ENCODE measurements at regions of chr13 and their contacts with region 1.

Region 1: DNA sequence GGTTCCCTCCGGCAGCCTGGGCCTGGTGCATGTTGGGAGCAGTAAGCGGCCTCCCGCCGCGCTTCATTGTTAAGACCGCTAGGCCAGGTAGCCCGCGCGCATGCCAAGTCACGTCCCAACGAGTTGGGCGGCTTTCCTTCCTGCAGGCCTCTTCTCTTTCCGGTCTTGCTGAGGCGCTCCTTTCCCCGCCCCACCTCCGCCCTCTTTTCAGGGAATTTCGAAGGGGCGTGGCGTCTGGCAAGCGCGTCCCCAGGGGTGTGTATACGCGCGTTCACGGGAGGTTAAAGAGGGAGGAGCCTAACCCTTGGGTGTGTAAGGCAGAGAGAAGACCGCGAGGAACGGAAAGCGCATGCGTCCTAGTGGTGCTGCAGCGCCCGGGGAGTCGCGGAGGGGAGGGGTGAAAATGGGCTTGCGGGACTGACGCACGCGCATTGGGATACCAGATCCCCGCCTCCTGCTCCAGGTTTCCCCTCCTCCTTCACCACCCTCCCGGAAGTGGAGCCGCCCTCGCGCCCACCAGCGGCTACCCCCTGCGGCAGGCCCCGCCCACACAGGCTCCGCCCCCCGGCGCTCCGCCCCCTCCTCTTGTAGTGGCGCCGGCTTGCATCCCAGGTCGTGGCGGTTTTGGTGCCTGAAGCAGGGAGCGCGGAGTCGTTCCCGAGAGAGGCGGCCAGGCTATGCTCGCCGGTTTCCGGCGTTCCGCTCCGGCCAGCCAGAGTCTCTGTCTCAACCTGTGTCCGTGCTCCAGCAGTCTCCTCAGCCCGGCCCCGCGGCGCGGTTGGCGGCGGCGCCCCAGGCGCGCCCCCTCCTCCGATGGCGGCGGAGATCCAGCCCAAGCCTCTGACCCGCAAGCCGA is at the start of gene WDFY2:
- DNase-seq: peak; percentile 100
- H3K4me3 Mint-ChIP-seq: peak within 1 kb of the TSS; percentile 88
- H3K27ac Mint-ChIP-seq: peak within 1 kb of the TSS; percentile 85
- H3K4me1 Mint-ChIP-seq: peaks cover 41% of the 10 kb centered on the region
- H3K27me3 Mint-ChIP-seq: no peaks in the 10 kb centered on the region
- CTCF ChIP-seq: no peak
- total RNA-seq, gene WDFY2: 46.7 and 56.2 TPM in 2 replicates

Region 2: GRCh38 chr13:51444922-51445321 is 139.2 kb before region 1 on chr13:
- CTCF ChIA-PET with region 1: interaction called, 3 read pairs
- POLR2A ChIA-PET with region 1: interaction called, 151 read pairs
- intact Hi-C with region 1: no loop called
- DNase-seq: peak; percentile 38
- H3K4me3 Mint-ChIP-seq: no peak overlapping the region
- H3K27ac Mint-ChIP-seq: no peak overlapping the region
- H3K4me1 Mint-ChIP-seq: peaks cover 7% of the 10 kb centered on the region
- H3K27me3 Mint-ChIP-seq: no peaks in the 10 kb centered on the region
- CTCF ChIP-seq: peak; percentile 32

Region 3: GRCh38 chr13:51557875-51558612 is 26.1 kb before region 1 on chr13:
- CTCF ChIA-PET with region 1: interaction called, 3 read pairs
- POLR2A ChIA-PET with region 1: interaction called, 45 read pairs
- intact Hi-C with region 1: no loop called
- DNase-seq: peak; percentile 79
- H3K4me3 Mint-ChIP-seq: peak overlapping the region; percentile 53
- H3K27ac Mint-ChIP-seq: peak overlapping the region; percentile 69
- H3K4me1 Mint-ChIP-seq: peaks cover 39% of the 10 kb centered on the region
- H3K27me3 Mint-ChIP-seq: no peaks in the 10 kb centered on the region
- CTCF ChIP-seq: no peak

Region 4: GRCh38 chr13:51632591-51633362 is 48.7 kb after region 1 on chr13:
- CTCF ChIA-PET with region 1: interaction called, 6 read pairs
- POLR2A ChIA-PET with region 1: interaction called, 31 read pairs
- intact Hi-C with region 1: no loop called
- DNase-seq: no peak
- H3K4me3 Mint-ChIP-seq: peak overlapping the region; percentile 66
- H3K27ac Mint-ChIP-seq: peak overlapping the region; percentile 97
- H3K4me1 Mint-ChIP-seq: peaks cover 50% of the 10 kb centered on the region
- H3K27me3 Mint-ChIP-seq: no peaks in the 10 kb centered on the region
- CTCF ChIP-seq: no peak

Region 5: DNA sequence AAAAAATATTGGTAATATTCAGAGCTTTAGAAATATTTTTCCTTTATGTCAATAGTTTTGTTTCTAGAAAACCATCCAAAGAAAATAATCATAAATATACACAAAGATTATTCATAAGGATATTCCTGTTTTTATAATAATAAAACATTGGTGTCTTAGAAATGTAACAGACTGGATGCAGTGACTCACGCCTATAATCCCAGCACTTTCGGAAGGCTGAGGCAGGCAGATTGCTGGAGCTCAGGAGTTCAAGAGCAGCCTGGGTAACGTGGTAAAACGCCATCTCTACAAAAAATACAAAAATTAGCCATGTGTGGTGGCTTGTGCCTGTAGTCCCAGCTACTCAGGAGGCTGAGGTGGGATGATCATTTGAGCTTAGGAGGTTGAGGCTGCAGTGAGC is 113.1 kb after region 1 on chr13:
- CTCF ChIA-PET with region 1: no interaction called
- POLR2A ChIA-PET with region 1: interaction called, 15 read pairs
- intact Hi-C with region 1: no loop called
- DNase-seq: peak; percentile 51
- H3K4me3 Mint-ChIP-seq: no peak overlapping the region
- H3K27ac Mint-ChIP-seq: peak overlapping the region; percentile 69
- H3K4me1 Mint-ChIP-seq: peaks cover 18% of the 10 kb centered on the region
- H3K27me3 Mint-ChIP-seq: no peaks in the 10 kb centered on the region
- CTCF ChIP-seq: no peak

Region 6: GRCh38 chr13:51781246-51782022 is 197.3 kb after region 1 on chr13:
- CTCF ChIA-PET with region 1: interaction called, 3 read pairs
- POLR2A ChIA-PET with region 1: interaction called, 3 read pairs
- intact Hi-C with region 1: loop called (anchors 2 kb)
- DNase-seq: peak; percentile 70
- H3K4me3 Mint-ChIP-seq: no peak overlapping the region
- H3K27ac Mint-ChIP-seq: peak overlapping the region; percentile 33
- H3K4me1 Mint-ChIP-seq: peaks cover 11% of the 10 kb centered on the region
- H3K27me3 Mint-ChIP-seq: no peaks in the 10 kb centered on the region
- CTCF ChIP-seq: peak; percentile 43